ENCODE measurements at regions of chr3 and their contacts with region 1.

Region 1: GRCh38 chr3:46895204-46895660 is 17.7 kb downstream of the PTH1R start:
- DNase-seq: peak; percentile 75 to 88
- H3K4me3 ChIP-seq: no peak overlapping the region
- H3K4me3 Mint-ChIP-seq: no peak overlapping the region
- H3K27ac Mint-ChIP-seq: no peak overlapping the region
- H3K4me1 ChIP-seq: peaks cover 9% of the 10 kb centered on the region; the same call in 1 of the 2 replicates
- H3K4me1 Mint-ChIP-seq: peaks cover 7% of the 10 kb centered on the region
- H3K27me3 ChIP-seq: no peaks in the 10 kb centered on the region
- H3K27me3 Mint-ChIP-seq: no peaks in the 10 kb centered on the region
- CTCF ChIP-seq: peak; percentile 90 to 95

Region 2: GRCh38 chr3:46593274-46593862 is 301.9 kb before region 1 on chr3:
- CTCF ChIA-PET with region 1: no interaction called
- POLR2A ChIA-PET with region 1: no interaction called
- intact Hi-C with region 1: loop called (anchors 10 kb)
- DNase-seq: peak in 1 of 2 experiments; percentile 38
- H3K4me3 ChIP-seq: no peak overlapping the region
- H3K4me3 Mint-ChIP-seq: no peak overlapping the region
- H3K27ac Mint-ChIP-seq: no peak overlapping the region
- H3K4me1 ChIP-seq: no peaks in the 10 kb centered on the region
- H3K4me1 Mint-ChIP-seq: no peaks in the 10 kb centered on the region
- H3K27me3 ChIP-seq: no peaks in the 10 kb centered on the region
- H3K27me3 Mint-ChIP-seq: no peaks in the 10 kb centered on the region
- CTCF ChIP-seq: no peak

Region 3: GRCh38 chr3:46733026-46733800 is 162.0 kb before region 1 on chr3:
- CTCF ChIA-PET with region 1: interaction called, 3 read pairs
- POLR2A ChIA-PET with region 1: no interaction called
- intact Hi-C with region 1: loop called (anchors 1 kb)
- DNase-seq: peak in 1 of 2 experiments; percentile 32
- H3K4me3 ChIP-seq: no peak overlapping the region
- H3K4me3 Mint-ChIP-seq: no peak overlapping the region
- H3K27ac Mint-ChIP-seq: no peak overlapping the region
- H3K4me1 ChIP-seq: no peaks in the 10 kb centered on the region
- H3K4me1 Mint-ChIP-seq: no peaks in the 10 kb centered on the region
- H3K27me3 ChIP-seq: no peaks in the 10 kb centered on the region
- H3K27me3 Mint-ChIP-seq: peaks cover 9% of the 10 kb centered on the region
- CTCF ChIP-seq: peak in 1 of 2 experiments; percentile 61

Region 4: DNA sequence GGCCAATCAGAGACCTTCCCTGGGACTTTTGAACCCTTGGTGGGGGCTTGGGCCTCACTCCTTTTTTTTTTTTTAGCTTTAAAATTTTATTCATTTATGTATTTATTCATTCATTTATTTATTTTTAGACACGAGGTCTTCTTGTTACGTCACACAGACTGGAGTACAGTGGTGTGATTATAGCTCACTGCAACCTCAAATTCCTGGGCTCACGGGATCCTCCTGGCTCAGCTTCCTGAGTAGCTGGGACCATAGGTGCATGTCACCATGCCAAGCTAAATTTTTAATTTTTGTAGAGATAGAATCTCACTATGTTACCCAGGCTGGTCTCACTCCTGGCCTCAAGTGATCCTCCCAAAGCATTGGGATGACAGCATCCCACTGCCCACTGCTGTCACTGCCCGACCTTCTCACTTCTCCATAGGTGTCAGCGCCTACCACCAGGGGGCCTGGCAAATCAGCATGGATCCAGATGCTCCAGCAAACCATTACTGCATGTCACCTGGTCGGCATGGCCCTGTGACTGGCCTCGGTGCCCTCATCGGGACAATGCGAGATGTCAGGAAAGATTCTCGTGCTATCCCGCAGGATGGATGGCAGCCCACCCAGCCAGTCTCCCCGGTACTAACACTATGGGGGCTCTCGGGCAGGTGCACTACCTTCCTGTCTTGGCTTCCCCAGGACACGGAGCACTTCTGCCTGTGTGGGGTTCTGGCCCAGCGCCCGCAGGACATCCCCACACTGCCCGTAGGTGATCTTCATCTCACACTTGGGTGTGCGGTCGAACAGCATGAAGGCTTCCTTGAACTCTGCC is 35.0 kb before region 1 on chr3:
- CTCF ChIA-PET with region 1: interaction called, 16 read pairs
- POLR2A ChIA-PET with region 1: no interaction called
- intact Hi-C with region 1: no loop called
- DNase-seq: peak; percentile 61 to 72
- H3K4me3 ChIP-seq: no peak overlapping the region
- H3K4me3 Mint-ChIP-seq: no peak overlapping the region
- H3K27ac Mint-ChIP-seq: no peak overlapping the region
- H3K4me1 ChIP-seq: peaks cover 27% of the 10 kb centered on the region
- H3K4me1 Mint-ChIP-seq: peaks cover 22% of the 10 kb centered on the region
- H3K27me3 ChIP-seq: no peaks in the 10 kb centered on the region
- H3K27me3 Mint-ChIP-seq: no peaks in the 10 kb centered on the region
- CTCF ChIP-seq: peak; percentile 66 to 67

Region 5: GRCh38 chr3:46878789-46879436 is 16.3 kb before region 1 on chr3:
- CTCF ChIA-PET with region 1: interaction called, 4 read pairs
- POLR2A ChIA-PET with region 1: interaction called, 7 read pairs
- intact Hi-C with region 1: loop called (anchors 2 kb)
- DNase-seq: peak; percentile 86 to 95
- H3K4me3 ChIP-seq: no peak overlapping the region
- H3K4me3 Mint-ChIP-seq: no peak overlapping the region
- H3K27ac Mint-ChIP-seq: peak overlapping the region; percentile 60
- H3K4me1 ChIP-seq: peaks cover 56% of the 10 kb centered on the region
- H3K4me1 Mint-ChIP-seq: peaks cover 10% of the 10 kb centered on the region
- H3K27me3 ChIP-seq: no peaks in the 10 kb centered on the region
- H3K27me3 Mint-ChIP-seq: peaks cover 5% of the 10 kb centered on the region
- CTCF ChIP-seq: no peak

Region 6: GRCh38 chr3:46923559-46924350 is 28.5 kb after region 1 on chr3:
- CTCF ChIA-PET with region 1: no interaction called
- POLR2A ChIA-PET with region 1: no interaction called
- intact Hi-C with region 1: no loop called
- DNase-seq: peak; percentile 55 to 69
- H3K4me3 ChIP-seq: no peak overlapping the region
- H3K4me3 Mint-ChIP-seq: no peak overlapping the region
- H3K27ac Mint-ChIP-seq: peak overlapping the region; percentile 57
- H3K4me1 ChIP-seq: 0 out of 2 replicates have a peak, but pooled peaks cover 4% of the 10 kb centered on the region
- H3K4me1 Mint-ChIP-seq: peaks cover 3% of the 10 kb centered on the region
- H3K27me3 ChIP-seq: no peaks in the 10 kb centered on the region
- H3K27me3 Mint-ChIP-seq: no peaks in the 10 kb centered on the region
- CTCF ChIP-seq: peak; percentile 61 to 83

Region 7: DNA sequence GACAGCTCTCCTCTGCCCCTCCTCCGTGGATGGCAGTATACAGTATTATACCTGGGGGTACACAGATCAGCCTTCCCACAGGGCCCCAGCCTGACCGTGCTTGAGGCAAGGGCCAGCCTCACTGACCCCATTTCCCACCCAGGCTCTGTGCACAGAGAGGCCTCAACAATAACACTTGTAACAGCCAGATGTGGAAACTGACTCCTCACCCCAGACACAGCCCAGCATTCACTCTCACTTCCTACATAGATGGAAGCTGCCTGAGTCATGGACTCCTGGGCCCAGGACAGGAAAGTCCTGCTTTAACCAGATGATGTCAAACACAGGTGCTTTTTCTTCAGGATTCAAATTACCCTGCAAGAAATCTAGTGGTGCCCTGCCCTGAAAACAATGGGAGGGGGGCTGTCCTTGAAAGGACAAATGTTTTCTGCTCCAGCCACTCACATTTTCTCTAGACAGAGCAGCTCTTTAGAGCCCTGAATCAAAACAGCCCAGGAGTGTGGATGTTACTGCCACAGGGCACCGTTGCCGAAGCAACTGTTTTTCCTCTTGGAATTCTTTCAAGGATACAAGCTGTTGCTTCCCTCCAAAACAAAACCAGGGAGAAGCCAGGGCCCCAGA is 65.0 kb after region 1 on chr3:
- CTCF ChIA-PET with region 1: no interaction called
- POLR2A ChIA-PET with region 1: no interaction called
- intact Hi-C with region 1: no loop called
- DNase-seq: no peak
- H3K4me3 ChIP-seq: no peak overlapping the region
- H3K4me3 Mint-ChIP-seq: no peak overlapping the region
- H3K27ac Mint-ChIP-seq: peak overlapping the region; percentile 73
- H3K4me1 ChIP-seq: peaks cover 78% of the 10 kb centered on the region
- H3K4me1 Mint-ChIP-seq: peaks cover 51% of the 10 kb centered on the region
- H3K27me3 ChIP-seq: no peaks in the 10 kb centered on the region
- H3K27me3 Mint-ChIP-seq: no peaks in the 10 kb centered on the region
- CTCF ChIP-seq: no peak

Region 8: GRCh38 chr3:47047673-47048072 is 152.4 kb after region 1 on chr3:
- CTCF ChIA-PET with region 1: no interaction called
- POLR2A ChIA-PET with region 1: no interaction called
- intact Hi-C with region 1: no loop called
- DNase-seq: no peak
- H3K4me3 ChIP-seq: no peak overlapping the region
- H3K4me3 Mint-ChIP-seq: no peak overlapping the region
- H3K27ac Mint-ChIP-seq: no peak overlapping the region
- H3K4me1 ChIP-seq: no peaks in the 10 kb centered on the region
- H3K4me1 Mint-ChIP-seq: no peaks in the 10 kb centered on the region
- H3K27me3 ChIP-seq: no peaks in the 10 kb centered on the region
- H3K27me3 Mint-ChIP-seq: no peaks in the 10 kb centered on the region
- CTCF ChIP-seq: no peak

Measured in Caco-2 (cell line).